Natural killer cell (primary cell): ENCODE measurements at regions of chr19 and their contacts with region 1.

Region 1: DNA sequence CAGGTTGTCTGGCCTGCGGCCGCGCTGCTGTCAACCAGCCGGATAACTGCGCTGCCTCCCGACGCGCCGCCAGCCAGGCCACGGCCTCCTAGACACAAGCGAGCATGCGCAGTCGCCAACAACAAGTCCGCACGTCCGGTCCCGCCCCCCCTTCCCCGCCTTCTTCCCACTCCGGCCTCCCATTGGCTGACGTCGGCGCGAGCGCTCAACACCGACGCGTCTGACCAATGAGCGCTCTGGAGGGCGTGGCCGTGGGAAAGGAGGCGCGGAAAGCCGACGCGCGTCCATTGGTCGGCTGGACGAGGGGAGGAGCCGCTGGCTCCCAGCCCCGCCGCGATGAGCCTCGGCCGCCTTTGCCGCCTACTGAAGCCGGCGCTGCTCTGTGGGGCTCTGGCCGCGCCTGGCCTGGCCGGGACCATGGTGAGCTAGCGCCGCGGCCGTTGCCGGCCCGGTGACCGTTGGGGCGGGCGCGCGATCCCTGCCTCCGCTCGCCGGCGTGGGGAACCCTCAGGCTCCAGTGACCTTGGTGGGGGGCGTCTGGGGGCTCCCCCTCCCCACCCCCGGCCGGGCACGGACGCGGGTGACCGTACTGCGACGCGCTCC is at the start of gene GPX4:
- DNase-seq: peak; percentile 96 to 100
- ATAC-seq: peak; percentile 81 to 93 (median 83)
- H3K4me3 ChIP-seq: peak within 1 kb of the TSS; percentile 75
- H3K4me3 Mint-ChIP-seq: peak within 1 kb of the TSS; percentile 76
- H3K27ac ChIP-seq: peak within 1 kb of the TSS; percentile 90
- H3K27ac Mint-ChIP-seq: peak within 1 kb of the TSS; percentile 88 to 89
- H3K4me1 ChIP-seq: peaks cover 58% of the 10 kb centered on the region
- H3K4me1 Mint-ChIP-seq: peaks cover 9 to 25% of the 10 kb centered on the region in 2 donors
- H3K27me3 ChIP-seq: no peaks in the 10 kb centered on the region
- H3K27me3 Mint-ChIP-seq: no peaks in the 10 kb centered on the region
- CTCF ChIP-seq: no peak
- total RNA-seq, gene GPX4: 108 to 126 (median 121) TPM

Region 2: GRCh38 chr19:1020868-1021425 is 82.9 kb before region 1 on chr19 and contains the start of gene TMEM259:
- intact Hi-C with region 1: loop called (anchors 1 kb)
- DNase-seq: peak; percentile 97 to 98
- ATAC-seq: peak; percentile 88 to 98 (median 88)
- H3K4me3 ChIP-seq: peak within 1 kb of the TSS; percentile 94
- H3K4me3 Mint-ChIP-seq: peak within 1 kb of the TSS; percentile 92
- H3K27ac ChIP-seq: peak within 1 kb of the TSS; percentile 100
- H3K27ac Mint-ChIP-seq: peak within 1 kb of the TSS; percentile 100
- H3K4me1 ChIP-seq: peaks cover 66% of the 10 kb centered on the region
- H3K4me1 Mint-ChIP-seq: peaks cover 24 to 49% of the 10 kb centered on the region in 2 donors
- H3K27me3 ChIP-seq: no peaks in the 10 kb centered on the region
- H3K27me3 Mint-ChIP-seq: peaks cover 0 to 3% of the 10 kb centered on the region in 2 donors
- CTCF ChIP-seq: no peak
- total RNA-seq, gene TMEM259: 310 to 354 (median 317) TPM

Region 3: DNA sequence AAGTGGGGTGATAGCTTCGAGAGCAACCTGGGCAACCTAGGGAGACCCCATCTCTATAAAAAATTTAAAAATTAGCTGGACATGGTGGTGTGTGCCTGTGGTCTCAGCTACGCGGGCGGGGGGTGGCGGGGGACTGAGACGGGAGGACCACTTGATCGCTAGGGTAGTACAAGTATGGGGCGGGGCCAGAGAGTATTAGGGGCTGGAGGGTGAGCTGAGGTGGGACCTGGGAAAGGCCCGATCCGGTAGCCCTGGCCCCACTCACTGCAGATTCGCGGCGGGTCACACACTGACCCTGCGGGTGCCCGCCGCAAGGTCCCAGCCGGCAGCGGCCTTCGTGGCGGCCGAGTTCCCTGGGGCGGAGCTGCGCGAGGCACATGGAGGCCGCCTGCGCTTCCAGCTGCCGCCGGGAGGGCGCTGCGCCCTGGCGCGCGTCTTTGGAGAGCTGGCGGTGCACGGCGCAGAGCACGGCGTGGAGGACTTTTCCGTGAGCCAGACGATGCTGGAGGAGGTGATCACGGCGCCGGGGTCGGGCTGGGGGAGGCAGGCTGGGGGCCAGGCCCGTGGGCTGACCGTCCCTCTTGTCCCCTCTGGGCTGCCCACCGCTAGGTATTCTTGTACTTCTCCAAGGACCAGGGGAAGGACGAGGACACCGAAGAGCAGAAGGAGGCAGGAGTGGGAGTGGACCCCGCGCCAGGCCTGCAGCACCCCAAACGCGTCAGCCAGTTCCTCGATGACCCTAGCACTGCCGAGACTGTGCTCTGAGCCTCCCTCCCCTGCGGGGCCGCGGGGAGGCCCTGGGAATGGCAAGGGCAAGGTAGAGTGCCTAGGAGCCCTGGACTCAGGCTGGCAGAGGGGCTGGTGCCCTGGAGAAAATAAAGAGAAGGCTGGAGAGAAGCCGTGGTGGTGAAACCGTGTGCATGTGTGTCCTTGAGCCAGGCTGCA is 38.9 kb before region 1 on chr19:
- intact Hi-C with region 1: loop called (anchors 5 kb)
- DNase-seq: peak; percentile 68 to 90
- ATAC-seq: peak; percentile 25 to 52 (median 34)
- H3K4me3 ChIP-seq: no peak overlapping the region
- H3K4me3 Mint-ChIP-seq: peak overlapping the region; percentile 76
- H3K27ac ChIP-seq: no peak overlapping the region
- H3K27ac Mint-ChIP-seq: peak overlapping the region; percentile 81 to 93
- H3K4me1 ChIP-seq: peaks cover 55% of the 10 kb centered on the region
- H3K4me1 Mint-ChIP-seq: peaks cover 19 to 47% of the 10 kb centered on the region in 2 donors
- H3K27me3 ChIP-seq: no peaks in the 10 kb centered on the region
- H3K27me3 Mint-ChIP-seq: no peaks in the 10 kb centered on the region
- CTCF ChIP-seq: peak; percentile 78

Region 4: GRCh38 chr19:1241417-1242095 is 137.7 kb after region 1 on chr19 and contains the start of gene ATP5F1D:
- intact Hi-C with region 1: loop called (anchors 2 kb)
- DNase-seq: peak; percentile 88 to 97
- ATAC-seq: peak; percentile 71 to 81 (median 74)
- H3K4me3 ChIP-seq: peak within 1 kb of the TSS; percentile 33
- H3K4me3 Mint-ChIP-seq: peak within 1 kb of the TSS; percentile 95
- H3K27ac ChIP-seq: no peak within 1 kb of the TSS
- H3K27ac Mint-ChIP-seq: peak within 1 kb of the TSS; percentile 86 to 89
- H3K4me1 ChIP-seq: peaks cover 69% of the 10 kb centered on the region
- H3K4me1 Mint-ChIP-seq: peaks cover 21 to 35% of the 10 kb centered on the region in 2 donors
- H3K27me3 ChIP-seq: peaks cover 12% of the 10 kb centered on the region
- H3K27me3 Mint-ChIP-seq: peaks cover 10 to 14% of the 10 kb centered on the region in 2 donors
- CTCF ChIP-seq: no peak
- total RNA-seq, gene ATP5F1D: 88.6 to 119 (median 104) TPM